Activated CD8-positive, alpha-beta T cell treated with anti-CD3 and anti-CD28 coated beads, Interleukin-2, amount 10 ng/mL, durations not matched to agents 7 days and 5 days (primary cell): ENCODE measurements at regions of chr5 and their contacts with region 1.

Region 1: GRCh38 chr5:117454716-117455596 is 880.3 kb upstream of the SEMA6A start:
- DNase-seq: peak; percentile 56
- ATAC-seq: peak; percentile 86
- H3K4me3 Mint-ChIP-seq: peak overlapping the region; percentile 34
- H3K27ac Mint-ChIP-seq: no peak overlapping the region
- H3K4me1 Mint-ChIP-seq: peaks cover 3% of the 10 kb centered on the region
- H3K27me3 Mint-ChIP-seq: no peaks in the 10 kb centered on the region

Region 2: GRCh38 chr5:117568622-117569021 is 113.7 kb after region 1 on chr5:
- CTCF ChIA-PET with region 1: no interaction called
- POLR2A ChIA-PET with region 1: no interaction called
- DNase-seq: no peak
- ATAC-seq: no peak
- H3K4me3 Mint-ChIP-seq: no peak overlapping the region
- H3K27ac Mint-ChIP-seq: no peak overlapping the region
- H3K4me1 Mint-ChIP-seq: no peaks in the 10 kb centered on the region
- H3K27me3 Mint-ChIP-seq: no peaks in the 10 kb centered on the region

Region 3: DNA sequence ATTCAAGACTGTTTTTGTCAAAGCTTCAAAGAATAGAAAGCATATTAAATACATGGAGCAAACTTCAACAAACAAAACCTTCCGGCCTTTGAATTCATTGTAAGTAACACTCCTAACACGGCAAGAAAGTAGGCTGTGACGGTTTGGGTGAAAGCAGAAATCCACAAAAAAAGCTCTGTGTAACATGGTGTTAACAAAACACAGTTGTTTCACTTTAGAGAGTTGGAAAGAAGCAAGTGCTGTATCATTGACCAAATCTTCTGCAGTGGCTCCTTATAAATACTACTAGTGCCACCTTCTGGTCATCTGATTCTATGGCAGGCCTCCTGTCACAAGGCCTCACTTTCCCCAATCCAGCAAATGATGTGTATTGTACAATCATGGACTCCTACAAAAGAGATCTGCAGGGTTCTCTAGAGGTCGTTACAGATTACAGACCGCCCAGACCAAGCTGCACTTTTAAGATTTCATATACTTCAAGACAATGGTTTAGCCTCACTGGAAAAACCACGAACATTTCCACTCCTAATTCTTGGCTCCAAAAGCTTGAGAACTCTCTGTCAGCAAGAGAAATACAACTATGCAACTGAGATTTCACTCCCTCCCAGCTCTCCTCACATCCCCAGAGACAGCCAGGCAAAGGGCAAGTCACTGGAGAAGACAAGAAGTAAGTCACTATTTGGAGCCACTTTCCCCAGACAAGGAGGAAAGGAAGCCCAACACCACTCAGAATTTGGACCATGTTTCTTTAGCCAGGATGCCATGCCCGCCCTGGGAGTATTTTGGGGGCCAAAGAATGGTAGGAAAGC is 1337.2 kb after region 1 on chr5:
- CTCF ChIA-PET with region 1: interaction called, 14 read pairs
- POLR2A ChIA-PET with region 1: no interaction called
- DNase-seq: peak; percentile 33
- ATAC-seq: peak; percentile 73
- H3K4me3 Mint-ChIP-seq: no peak overlapping the region
- H3K27ac Mint-ChIP-seq: no peak overlapping the region
- H3K4me1 Mint-ChIP-seq: no peaks in the 10 kb centered on the region
- H3K27me3 Mint-ChIP-seq: no peaks in the 10 kb centered on the region